Activated CD8-positive, alpha-beta T cell treated with anti-CD3 and anti-CD28 coated beads for 36 hours (primary cell): ENCODE measurements at regions of chr1 and their contacts with region 1.

Region 1: GRCh38 chr1:23809751-23810171 is 9.2 kb upstream of the GALE start:
- DNase-seq: peak; percentile 88
- ATAC-seq: peak; percentile 96
- H3K4me3 Mint-ChIP-seq: no peak overlapping the region
- H3K27ac Mint-ChIP-seq: no peak overlapping the region
- H3K4me1 Mint-ChIP-seq: peaks cover 9% of the 10 kb centered on the region
- H3K27me3 Mint-ChIP-seq: no peaks in the 10 kb centered on the region
- CTCF ChIP-seq: peak; percentile 79

Region 2: DNA sequence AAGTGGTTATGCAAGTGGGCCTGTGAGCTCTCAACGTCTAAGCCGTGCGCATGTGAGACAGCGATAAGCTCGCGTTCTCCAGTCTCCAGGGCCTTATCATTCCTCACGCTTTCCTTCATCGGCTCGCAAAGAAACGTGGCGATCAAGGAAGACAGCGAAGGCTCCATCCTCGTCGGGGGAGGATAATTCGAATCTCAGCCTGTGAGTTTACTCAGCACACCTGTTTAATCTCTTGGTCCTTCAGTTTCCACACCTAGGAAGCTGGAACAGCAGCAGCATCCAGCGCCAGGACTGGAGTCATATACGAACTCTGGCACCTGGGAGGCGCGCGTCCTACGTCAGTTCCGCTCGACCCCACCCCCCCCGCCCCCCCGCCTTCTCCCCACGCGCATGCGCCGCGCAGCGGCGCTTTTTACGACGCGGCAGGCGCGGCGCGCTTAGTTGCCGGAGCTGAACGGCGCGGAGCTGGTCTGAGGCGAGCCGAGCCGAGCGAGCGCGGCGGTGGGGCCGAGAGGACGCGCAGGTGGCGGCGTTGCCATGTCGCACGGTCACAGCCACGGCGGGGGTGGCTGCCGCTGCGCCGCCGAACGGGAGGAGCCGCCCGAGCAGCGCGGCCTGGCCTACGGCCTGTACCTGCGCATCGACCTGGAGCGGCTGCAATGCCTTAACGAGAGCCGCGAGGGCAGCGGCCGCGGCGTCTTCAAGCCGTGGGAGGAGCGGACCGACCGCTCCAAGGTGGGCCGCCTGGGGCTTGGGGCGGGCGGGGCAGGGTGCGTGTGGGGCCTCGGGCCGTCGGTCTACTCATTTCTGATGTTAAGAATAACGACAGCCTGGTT is 31.6 kb before region 1 on chr1 and contains the start of gene PITHD1:
- CTCF ChIA-PET with region 1: interaction called, 42 read pairs
- POLR2A ChIA-PET with region 1: interaction called, 3 read pairs
- intact Hi-C with region 1: no loop called
- DNase-seq: peak; percentile 83
- ATAC-seq: peak; percentile 91
- H3K4me3 Mint-ChIP-seq: peak within 1 kb of the TSS; percentile 97
- H3K27ac Mint-ChIP-seq: peak within 1 kb of the TSS; percentile 97
- H3K4me1 Mint-ChIP-seq: peaks cover 47% of the 10 kb centered on the region
- H3K27me3 Mint-ChIP-seq: no peaks in the 10 kb centered on the region
- CTCF ChIP-seq: no peak
- total RNA-seq, gene PITHD1: 65.8 to 65.9 TPM

Region 3: GRCh38 chr1:23838401-23838866 is 28.7 kb after region 1 on chr1:
- CTCF ChIA-PET with region 1: interaction called, 14 read pairs
- POLR2A ChIA-PET with region 1: interaction called, 3 read pairs
- intact Hi-C with region 1: no loop called
- DNase-seq: peak; percentile 84
- ATAC-seq: peak; percentile 100
- H3K4me3 Mint-ChIP-seq: peak overlapping the region; percentile 65
- H3K27ac Mint-ChIP-seq: no peak overlapping the region
- H3K4me1 Mint-ChIP-seq: peaks cover 12% of the 10 kb centered on the region
- H3K27me3 Mint-ChIP-seq: peaks cover 3% of the 10 kb centered on the region
- CTCF ChIP-seq: no peak

Region 4: DNA sequence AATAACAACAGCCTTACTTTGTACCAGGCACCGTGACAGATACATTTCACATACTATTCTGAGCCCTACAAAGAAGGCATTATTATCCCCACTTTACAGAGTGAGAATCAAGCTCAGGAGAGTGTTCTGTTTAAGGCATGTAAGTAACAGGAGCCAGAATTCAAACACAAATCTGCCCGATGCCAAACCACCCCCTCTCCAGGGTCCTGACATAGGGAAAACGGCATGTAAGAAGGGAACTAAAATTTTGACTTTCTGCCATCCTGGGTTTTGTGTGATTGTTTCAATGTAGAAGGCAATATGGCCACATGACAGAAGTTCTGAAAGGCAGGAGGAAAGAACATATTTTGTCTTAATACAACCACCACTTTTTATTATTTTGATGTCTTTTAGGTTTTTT is 52.9 kb after region 1 on chr1:
- CTCF ChIA-PET with region 1: interaction called, 33 read pairs
- POLR2A ChIA-PET with region 1: no interaction called
- intact Hi-C with region 1: loop called (anchors 5 kb)
- DNase-seq: no peak
- ATAC-seq: no peak
- H3K4me3 Mint-ChIP-seq: no peak overlapping the region
- H3K27ac Mint-ChIP-seq: no peak overlapping the region
- H3K4me1 Mint-ChIP-seq: peaks cover 12% of the 10 kb centered on the region
- H3K27me3 Mint-ChIP-seq: no peaks in the 10 kb centered on the region
- CTCF ChIP-seq: no peak

Region 5: GRCh38 chr1:23908493-23909341 is 99.0 kb after region 1 on chr1:
- CTCF ChIA-PET with region 1: interaction called, 23 read pairs
- POLR2A ChIA-PET with region 1: no interaction called
- intact Hi-C with region 1: no loop called
- DNase-seq: peak; percentile 67
- ATAC-seq: peak; percentile 31
- H3K4me3 Mint-ChIP-seq: peak overlapping the region; percentile 31
- H3K27ac Mint-ChIP-seq: peak overlapping the region; percentile 71
- H3K4me1 Mint-ChIP-seq: peaks cover 70% of the 10 kb centered on the region
- H3K27me3 Mint-ChIP-seq: no peaks in the 10 kb centered on the region
- CTCF ChIP-seq: no peak

Region 6: DNA sequence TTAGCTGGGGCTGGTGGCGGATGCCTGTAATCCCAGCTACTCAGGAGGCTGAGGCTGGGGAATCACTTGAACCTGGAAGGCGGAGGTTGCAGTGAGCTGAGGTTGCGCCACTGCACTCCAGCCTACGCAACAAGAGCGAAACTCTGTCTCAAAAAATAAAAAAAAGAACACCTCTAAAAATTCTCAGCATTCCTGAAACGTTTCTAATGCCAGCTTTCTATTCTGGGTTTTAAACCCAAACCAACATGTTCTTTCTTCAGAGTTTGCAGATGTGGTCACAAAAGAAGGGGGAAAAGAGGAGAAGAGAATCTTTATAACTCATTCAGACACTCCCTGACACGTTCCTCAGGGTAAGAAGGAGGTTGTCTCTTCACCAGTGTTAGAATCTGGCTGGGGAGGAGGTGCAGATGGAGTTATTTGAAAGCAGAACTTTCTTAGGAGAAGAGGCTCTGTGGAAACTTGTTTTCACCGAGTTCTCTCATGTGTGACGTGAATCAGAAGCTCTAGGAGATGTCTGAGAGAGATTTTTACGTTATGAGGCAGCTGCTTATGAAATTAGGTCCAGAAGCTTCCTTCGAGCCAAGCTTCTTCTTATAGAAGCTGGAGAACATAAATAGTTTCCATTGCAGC is 121.2 kb after region 1 on chr1:
- CTCF ChIA-PET with region 1: interaction called, 10 read pairs
- POLR2A ChIA-PET with region 1: no interaction called
- intact Hi-C with region 1: no loop called
- DNase-seq: no peak
- ATAC-seq: no peak
- H3K4me3 Mint-ChIP-seq: no peak overlapping the region
- H3K27ac Mint-ChIP-seq: no peak overlapping the region
- H3K4me1 Mint-ChIP-seq: no peaks in the 10 kb centered on the region
- H3K27me3 Mint-ChIP-seq: no peaks in the 10 kb centered on the region
- CTCF ChIP-seq: no peak

Region 7: GRCh38 chr1:24043345-24044032 is 233.7 kb after region 1 on chr1:
- CTCF ChIA-PET with region 1: no interaction called
- POLR2A ChIA-PET with region 1: no interaction called
- intact Hi-C with region 1: no loop called
- DNase-seq: no peak
- ATAC-seq: no peak
- H3K4me3 Mint-ChIP-seq: no peak overlapping the region
- H3K27ac Mint-ChIP-seq: no peak overlapping the region
- H3K4me1 Mint-ChIP-seq: peaks cover 7% of the 10 kb centered on the region
- H3K27me3 Mint-ChIP-seq: peaks cover 2% of the 10 kb centered on the region
- CTCF ChIP-seq: no peak